ENCODE measurements at regions of chr3 and their contacts with region 1.

Region 1: DNA sequence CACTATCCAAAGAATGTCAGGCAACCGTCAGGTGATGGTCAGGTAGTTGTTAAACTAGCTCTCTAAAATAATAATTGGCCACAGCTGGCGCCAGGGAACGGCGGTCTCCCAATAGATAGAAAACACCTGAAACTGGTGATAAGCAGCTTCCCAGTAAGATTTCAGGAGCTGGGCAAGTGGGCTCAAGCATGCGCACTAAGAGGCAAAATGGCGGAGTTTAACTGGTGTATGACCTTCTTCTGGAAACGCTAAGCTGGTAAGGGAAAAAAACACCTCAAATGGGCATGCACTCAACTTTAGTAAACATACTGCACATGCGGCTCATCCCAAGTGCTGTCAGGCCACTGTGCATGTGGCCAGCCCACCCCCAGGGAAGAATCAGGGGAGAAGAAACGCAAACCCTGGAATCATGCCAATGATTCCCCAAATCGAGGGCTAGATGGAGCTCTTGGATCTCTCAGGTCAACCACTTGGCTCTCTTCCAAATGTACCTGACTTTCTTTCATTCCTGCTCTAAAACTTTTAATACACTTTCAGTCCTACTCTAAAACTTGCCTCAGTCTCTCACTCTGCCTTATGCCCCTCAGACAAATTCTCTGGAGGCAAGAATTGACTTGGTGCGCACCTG is 195.0 kb downstream of the ZNF621 start:
- DNase-seq: peak in 1 of 2 experiments; percentile 17
- H3K4me3 ChIP-seq: no peak overlapping the region
- H3K27ac ChIP-seq: no peak overlapping the region
- H3K4me1 ChIP-seq: no peaks in the 10 kb centered on the region; the same call in 1 of the 2 replicates
- H3K27me3 ChIP-seq: no peaks in the 10 kb centered on the region
- CTCF ChIP-seq: peak; percentile 46; the same call in 1 of the 2 replicates

Region 2: GRCh38 chr3:41881233-41881821 is 1161.6 kb after region 1 on chr3:
- CTCF ChIA-PET with region 1: no interaction called
- POLR2A ChIA-PET with region 1: no interaction called
- intact Hi-C with region 1: loop called (anchors 1 kb)
- DNase-seq: peak; percentile 13 to 32
- H3K4me3 ChIP-seq: no peak overlapping the region
- H3K27ac ChIP-seq: no peak overlapping the region
- H3K4me1 ChIP-seq: no peaks in the 10 kb centered on the region
- H3K27me3 ChIP-seq: no peaks in the 10 kb centered on the region
- CTCF ChIP-seq: peak; percentile 77